Common myeloid progenitor, CD34-positive (primary cell): ENCODE measurements at regions of chr20 and their contacts with region 1.

Region 1: GRCh38 chr20:21323640-21324039 is 20.5 kb downstream of the XRN2 start:
- DNase-seq: peak in 1 of 3 donors; percentile 20
- H3K4me3 ChIP-seq: peak overlapping the region in 1 of 7 experiments; percentile 11
- H3K27ac ChIP-seq: peak overlapping the region in 1 of 2 experiments; percentile 23
- H3K4me1 ChIP-seq: peaks cover 3 to 40% (median 17%) of the 10 kb centered on the region in 4 experiments
- H3K27me3 ChIP-seq: no peaks in the 10 kb centered on the region

Region 2: DNA sequence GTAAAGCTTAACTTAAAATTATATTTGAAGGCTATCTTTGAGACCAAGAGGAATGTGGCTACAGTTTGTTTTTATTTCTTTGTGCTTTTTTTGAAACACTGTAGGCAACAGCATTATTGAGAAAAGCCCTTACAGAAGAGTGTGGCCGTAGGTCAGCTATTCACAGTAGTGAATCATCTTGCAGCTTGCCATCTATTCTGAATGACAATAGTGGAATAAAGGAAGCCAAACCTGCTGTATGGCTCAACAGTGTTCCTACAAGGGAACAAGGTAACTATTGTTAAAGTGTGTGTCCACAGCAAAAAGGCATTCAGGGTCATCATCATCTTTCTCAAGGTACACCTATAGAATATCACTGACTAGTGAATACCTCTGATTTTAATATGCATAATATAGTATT is 109.2 kb before region 1 on chr20:
- CTCF ChIA-PET with region 1: no interaction called
- POLR2A ChIA-PET with region 1: no interaction called
- DNase-seq: no peak
- H3K4me3 ChIP-seq: no peak overlapping the region
- H3K27ac ChIP-seq: no peak overlapping the region
- H3K4me1 ChIP-seq: no peaks in the 10 kb centered on the region
- H3K27me3 ChIP-seq: no peaks in the 10 kb centered on the region

Region 3: DNA sequence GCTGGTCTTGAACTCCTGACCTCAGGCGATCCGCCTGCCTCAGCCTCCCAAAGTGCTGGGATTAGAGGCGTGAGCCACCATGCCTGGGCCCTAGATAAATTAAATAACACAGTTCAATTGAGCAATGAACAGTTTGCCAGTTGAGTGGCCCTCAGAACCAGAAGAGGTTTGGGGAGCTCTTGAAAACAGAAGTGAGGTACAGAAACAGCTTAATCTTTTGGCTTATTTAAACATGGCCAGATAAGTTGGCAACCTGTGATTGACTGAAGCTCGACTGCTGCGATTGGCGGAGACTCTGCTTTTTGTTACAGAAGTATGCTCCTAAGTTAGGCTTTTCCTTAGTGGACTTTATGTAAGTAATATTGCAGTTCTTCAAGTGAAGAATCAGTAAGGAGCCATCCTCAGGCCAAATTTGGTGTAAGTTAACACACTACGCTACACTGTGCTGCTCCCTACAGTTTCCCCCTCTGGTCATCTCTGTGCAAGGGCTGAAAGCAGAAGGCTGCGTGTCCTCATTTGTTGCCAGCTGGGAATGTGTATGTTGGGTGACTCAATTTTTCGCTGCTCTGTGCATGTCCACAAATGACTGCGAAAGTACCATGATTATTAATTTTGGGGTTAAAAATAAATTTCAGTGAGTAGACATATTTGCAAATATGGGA is 10.7 kb before region 1 on chr20:
- CTCF ChIA-PET with region 1: interaction called, 20 read pairs
- POLR2A ChIA-PET with region 1: interaction called, 3 read pairs
- DNase-seq: no peak
- H3K4me3 ChIP-seq: no peak overlapping the region
- H3K27ac ChIP-seq: no peak overlapping the region
- H3K4me1 ChIP-seq: peaks cover 0 to 9% (median 3%) of the 10 kb centered on the region in 4 experiments
- H3K27me3 ChIP-seq: no peaks in the 10 kb centered on the region

Region 4: GRCh38 chr20:21352703-21353102 is 29.1 kb after region 1 on chr20:
- CTCF ChIA-PET with region 1: no interaction called
- POLR2A ChIA-PET with region 1: no interaction called
- DNase-seq: peak in 2 of 3 donors; percentile 3 to 7
- H3K4me3 ChIP-seq: no peak overlapping the region
- H3K27ac ChIP-seq: no peak overlapping the region
- H3K4me1 ChIP-seq: no peaks in the 10 kb centered on the region
- H3K27me3 ChIP-seq: no peaks in the 10 kb centered on the region